HEK293 (cell line): ENCODE measurements at regions of chr6 and their contacts with region 1.

Region 1: DNA sequence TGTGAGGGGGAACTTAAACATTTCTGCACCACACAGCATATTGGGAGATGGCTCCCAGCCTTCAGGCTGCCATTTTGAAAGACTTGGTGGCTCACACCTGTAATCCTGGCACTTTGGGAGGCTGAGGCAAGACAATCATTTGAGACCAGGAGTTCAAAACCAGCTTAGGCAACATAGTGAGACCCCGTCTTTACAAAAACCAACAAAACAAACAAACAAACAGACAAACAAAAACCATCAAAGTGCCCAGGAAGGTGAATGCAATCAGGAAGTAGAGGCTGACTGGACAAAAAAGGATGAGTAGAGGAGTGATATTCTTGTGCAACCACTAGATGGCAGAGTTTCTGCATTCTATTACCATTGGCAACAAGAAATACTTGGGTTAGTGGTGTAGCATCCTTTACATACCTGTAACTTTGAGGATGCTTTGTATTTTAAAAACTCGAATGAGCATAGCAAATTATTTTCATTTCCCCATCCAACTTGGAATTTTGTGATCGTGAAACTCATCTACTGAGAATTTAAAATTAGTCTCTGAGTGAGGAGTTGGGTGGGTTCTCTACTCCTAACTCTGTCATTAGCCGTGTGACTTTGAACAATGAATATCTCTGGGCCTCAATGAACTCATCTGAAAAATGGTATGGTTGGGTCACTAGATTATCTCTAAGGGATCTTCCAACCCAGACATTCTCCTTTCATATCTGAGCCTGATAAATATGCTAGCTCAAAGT is 84.4 kb downstream of the CRYBG1 start:
- H3K4me3 ChIP-seq: no peak overlapping the region
- H3K27ac ChIP-seq: no peak overlapping the region
- H3K4me1 ChIP-seq: peaks cover 6% of the 10 kb centered on the region; the same call in 1 of the 2 replicates
- CTCF ChIP-seq: peak; percentile 60

Region 2: GRCh38 chr6:106227612-106228507 is 217.1 kb before region 1 on chr6:
- CTCF ChIA-PET with region 1: no interaction called
- POLR2A ChIA-PET with region 1: no interaction called
- H3K4me3 ChIP-seq: no peak overlapping the region
- H3K27ac ChIP-seq: no peak overlapping the region
- H3K4me1 ChIP-seq: no peaks in the 10 kb centered on the region
- CTCF ChIP-seq: no peak

Region 3: DNA sequence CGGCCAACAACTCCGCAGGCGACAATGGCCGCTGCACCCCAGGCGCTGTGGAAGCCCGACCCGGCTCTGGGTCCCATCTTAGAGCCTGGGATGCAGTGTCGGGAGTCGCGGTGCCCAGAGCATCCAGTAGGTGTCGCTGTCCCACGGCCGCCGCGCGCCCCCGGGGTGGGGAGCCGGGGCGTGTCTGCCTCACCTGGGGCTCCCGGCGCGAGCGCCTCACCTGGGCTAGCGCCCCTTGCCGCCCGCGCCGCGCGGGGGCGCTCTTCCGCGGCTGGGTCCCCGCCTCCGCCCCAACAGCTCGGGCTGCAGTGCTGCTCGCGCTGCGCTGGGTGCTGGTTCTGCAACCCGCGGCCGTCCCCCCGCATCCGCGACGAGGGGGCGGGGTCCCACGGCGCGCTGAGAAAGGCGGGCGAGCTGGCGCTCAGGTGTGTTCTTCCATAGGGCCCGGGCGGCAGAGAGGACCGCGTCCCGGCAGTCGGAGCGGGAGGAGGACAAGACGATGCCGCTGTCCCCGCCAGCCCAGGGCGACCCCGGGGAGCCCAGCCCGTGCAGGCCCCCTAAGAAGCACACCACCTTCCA is 84.4 kb before region 1 on chr6 and contains the start of gene CRYBG1:
- CTCF ChIA-PET with region 1: interaction called, 11 read pairs
- POLR2A ChIA-PET with region 1: no interaction called
- H3K4me3 ChIP-seq: peak within 1 kb of the TSS; percentile 68
- H3K27ac ChIP-seq: peak within 1 kb of the TSS; percentile 25; the same call in 1 of the 2 replicates
- H3K4me1 ChIP-seq: 0 out of 2 replicates have a peak, but pooled peaks cover 2% of the 10 kb centered on the region
- CTCF ChIP-seq: peak; percentile 88

Region 4: DNA sequence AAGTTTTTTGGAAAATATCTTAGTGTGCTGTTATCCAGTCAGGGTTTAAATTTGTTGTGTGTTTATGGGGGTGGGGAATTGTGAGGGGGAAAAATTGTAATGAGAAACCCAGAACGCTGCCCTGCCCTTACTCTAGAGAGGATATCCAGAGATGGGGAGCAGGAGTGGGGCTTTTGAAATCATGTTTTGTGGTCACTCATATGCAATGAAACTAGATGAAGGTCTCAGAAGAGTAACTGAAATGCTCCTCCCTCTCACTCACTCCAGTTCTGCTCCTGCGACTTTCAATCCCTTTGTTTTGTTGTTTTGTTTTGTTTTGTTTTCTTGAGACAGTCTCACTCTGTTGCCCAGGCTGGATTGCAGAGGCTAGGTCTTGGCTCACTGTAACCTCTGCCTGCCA is 15.5 kb after region 1 on chr6:
- CTCF ChIA-PET with region 1: interaction called, 12 read pairs
- POLR2A ChIA-PET with region 1: no interaction called
- H3K4me3 ChIP-seq: no peak overlapping the region
- H3K27ac ChIP-seq: no peak overlapping the region
- H3K4me1 ChIP-seq: no peaks in the 10 kb centered on the region
- CTCF ChIP-seq: no peak

Region 5: DNA sequence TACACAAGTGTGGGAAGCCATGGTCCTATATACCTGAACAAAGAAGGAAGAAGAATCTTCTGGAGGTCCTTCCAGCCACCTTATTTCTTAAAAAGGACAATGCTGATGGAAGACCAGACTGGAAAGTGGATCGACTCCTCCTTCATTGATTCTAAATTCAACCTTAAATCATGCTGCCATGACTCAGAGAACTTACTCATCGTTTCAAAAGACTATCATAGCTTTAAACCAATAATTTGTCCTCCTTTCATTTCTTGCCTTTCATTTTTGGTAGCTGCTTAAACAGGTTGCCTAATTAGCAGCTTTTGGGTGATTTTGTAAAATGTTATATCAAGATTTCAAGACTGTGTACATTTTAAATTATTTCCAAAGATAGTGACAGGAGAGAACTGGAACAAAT is 123.6 kb after region 1 on chr6:
- CTCF ChIA-PET with region 1: interaction called, 291 read pairs
- POLR2A ChIA-PET with region 1: interaction called, 5 read pairs
- H3K4me3 ChIP-seq: no peak overlapping the region
- H3K27ac ChIP-seq: no peak overlapping the region
- H3K4me1 ChIP-seq: no peaks in the 10 kb centered on the region
- CTCF ChIP-seq: no peak

Region 6: GRCh38 chr6:106979427-106979884 is 534.5 kb after region 1 on chr6:
- CTCF ChIA-PET with region 1: interaction called, 28 read pairs
- POLR2A ChIA-PET with region 1: no interaction called
- H3K4me3 ChIP-seq: no peak overlapping the region
- H3K27ac ChIP-seq: no peak overlapping the region
- H3K4me1 ChIP-seq: no peaks in the 10 kb centered on the region
- CTCF ChIP-seq: peak; percentile 77